ENCODE measurements at regions of chr1 and their contacts with region 1.

Region 1: DNA sequence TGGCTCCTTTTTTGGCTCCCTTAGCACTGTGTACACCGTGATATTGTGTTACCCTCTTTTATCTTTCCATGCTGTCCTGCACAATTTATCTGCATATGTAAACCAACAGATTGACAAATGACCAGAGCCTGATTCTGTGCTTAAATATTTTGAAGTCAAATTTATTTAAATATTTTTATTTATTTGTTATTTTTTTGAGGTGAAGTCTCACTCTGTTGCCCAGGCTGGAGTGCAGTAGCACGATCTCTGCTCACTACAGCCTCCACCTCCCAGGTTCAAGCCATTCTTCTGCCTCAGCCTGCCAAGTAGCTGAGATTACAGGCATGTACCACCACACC is 12.8 kb downstream of the PMF1 start:
- DNase-seq: no peak
- ATAC-seq: no peak

Region 2: DNA sequence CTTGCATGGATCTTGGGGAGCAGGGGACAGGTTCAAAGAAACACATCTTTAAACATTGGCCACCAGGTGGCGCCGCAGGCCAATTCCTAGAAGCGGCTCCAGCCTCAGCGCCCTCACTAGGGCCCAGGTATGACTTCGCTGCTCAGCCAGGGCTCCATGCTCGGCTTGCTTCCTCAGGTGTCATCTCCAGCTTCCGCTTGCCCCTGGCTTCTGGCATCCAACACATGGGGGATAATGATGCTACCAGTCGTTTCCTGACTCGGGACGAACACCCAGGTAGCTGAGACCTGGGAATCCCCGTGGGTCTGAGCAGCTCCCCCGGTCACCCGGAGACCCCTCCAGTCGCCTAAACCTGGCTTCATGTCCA is 134.8 kb before region 1 on chr1:
- intact Hi-C with region 1: loop called (anchors 2 kb)
- DNase-seq: peak; percentile 90
- ATAC-seq: peak; percentile 87

Region 3: DNA sequence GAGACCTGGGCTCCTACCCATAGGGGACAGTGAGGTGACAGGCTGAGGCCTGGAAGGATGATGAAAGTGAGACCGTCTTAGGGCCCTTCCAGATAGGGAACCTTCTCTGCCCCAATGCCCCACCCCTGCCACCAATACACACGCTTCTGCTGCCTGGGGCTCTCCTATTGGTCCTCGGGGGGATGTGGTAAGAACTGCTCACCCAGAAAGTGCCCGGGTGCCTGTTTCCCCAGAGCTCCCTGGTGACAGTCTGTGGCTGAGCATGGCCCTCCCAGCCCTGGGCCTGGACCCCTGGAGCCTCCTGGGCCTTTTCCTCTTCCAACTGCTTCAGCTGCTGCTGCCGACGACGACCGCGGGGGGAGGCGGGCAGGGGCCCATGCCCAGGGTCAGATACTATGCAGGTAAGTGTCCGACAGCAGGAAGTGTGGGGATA is 71.3 kb before region 1 on chr1:
- intact Hi-C with region 1: loop called (anchors 5 kb)
- DNase-seq: peak; percentile 72
- ATAC-seq: peak; percentile 58

Region 4: GRCh38 chr1:156356875-156357534 is 131.4 kb after region 1 on chr1:
- intact Hi-C with region 1: no loop called
- DNase-seq: no peak
- ATAC-seq: peak; percentile 89

Measured in Right ventricle myocardium superior (tissue), 1 donor.